Thyroid gland (tissue), 4 donors: ENCODE measurements at regions of chr11 and their contacts with region 1.

Region 1: DNA sequence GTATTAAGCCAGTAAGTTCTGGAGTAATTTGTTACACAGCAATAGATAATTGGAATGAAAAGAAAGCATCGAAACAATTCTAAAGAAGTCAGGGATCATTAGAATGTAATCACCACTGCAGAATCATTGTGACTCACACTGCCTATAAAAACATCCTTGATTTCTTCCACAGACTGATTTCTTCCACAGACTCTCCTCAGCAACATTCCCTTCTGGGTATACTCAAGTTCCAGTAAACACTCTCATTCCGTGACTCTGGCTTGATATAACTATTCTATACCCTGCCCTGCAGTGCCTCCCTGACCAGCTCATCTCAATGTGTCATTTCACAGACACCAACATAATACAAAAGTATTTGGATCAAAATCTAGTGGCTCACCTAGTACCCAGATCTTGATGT is 120.5 kb downstream of the BBOX1 start:
- DNase-seq: no peak
- H3K4me3 ChIP-seq: no peak overlapping the region
- H3K27ac ChIP-seq: peak overlapping the region in 1 of 3 donors; percentile 78
- H3K4me1 ChIP-seq: peaks cover 17 to 20% of the 10 kb centered on the region in 2 donors
- H3K27me3 ChIP-seq: no peaks in the 10 kb centered on the region
- CTCF ChIP-seq: no peak
- POLR2A ChIP-seq: no peak

Region 2: DNA sequence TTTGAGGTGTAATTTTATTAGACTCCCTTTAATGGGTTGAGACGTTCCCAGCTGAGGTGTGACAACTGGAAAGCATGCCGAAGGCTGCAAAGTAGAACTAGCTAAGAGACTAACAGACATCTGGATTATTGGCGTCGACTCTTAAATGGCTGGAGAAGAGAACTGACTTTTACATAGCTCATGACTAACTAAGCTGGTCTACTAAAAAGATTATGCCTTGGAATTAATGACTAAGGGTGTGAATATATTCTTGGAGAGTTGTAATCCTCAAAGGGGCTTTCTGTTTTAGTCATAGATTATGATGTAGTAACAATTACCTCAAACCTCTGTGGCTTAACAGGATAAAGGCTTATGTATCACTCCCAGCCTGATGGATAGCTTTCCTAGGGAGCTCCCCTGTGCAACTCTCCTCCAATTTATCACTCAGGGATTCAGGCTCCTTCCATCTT is 399.7 kb before region 1 on chr11:
- intact Hi-C with region 1: loop called (anchors 5 kb)
- DNase-seq: no peak
- H3K4me3 ChIP-seq: no peak overlapping the region
- H3K27ac ChIP-seq: no peak overlapping the region
- H3K4me1 ChIP-seq: peaks cover 0 to 8% of the 10 kb centered on the region in 2 donors
- H3K27me3 ChIP-seq: no peaks in the 10 kb centered on the region
- CTCF ChIP-seq: no peak
- POLR2A ChIP-seq: no peak

Region 3: DNA sequence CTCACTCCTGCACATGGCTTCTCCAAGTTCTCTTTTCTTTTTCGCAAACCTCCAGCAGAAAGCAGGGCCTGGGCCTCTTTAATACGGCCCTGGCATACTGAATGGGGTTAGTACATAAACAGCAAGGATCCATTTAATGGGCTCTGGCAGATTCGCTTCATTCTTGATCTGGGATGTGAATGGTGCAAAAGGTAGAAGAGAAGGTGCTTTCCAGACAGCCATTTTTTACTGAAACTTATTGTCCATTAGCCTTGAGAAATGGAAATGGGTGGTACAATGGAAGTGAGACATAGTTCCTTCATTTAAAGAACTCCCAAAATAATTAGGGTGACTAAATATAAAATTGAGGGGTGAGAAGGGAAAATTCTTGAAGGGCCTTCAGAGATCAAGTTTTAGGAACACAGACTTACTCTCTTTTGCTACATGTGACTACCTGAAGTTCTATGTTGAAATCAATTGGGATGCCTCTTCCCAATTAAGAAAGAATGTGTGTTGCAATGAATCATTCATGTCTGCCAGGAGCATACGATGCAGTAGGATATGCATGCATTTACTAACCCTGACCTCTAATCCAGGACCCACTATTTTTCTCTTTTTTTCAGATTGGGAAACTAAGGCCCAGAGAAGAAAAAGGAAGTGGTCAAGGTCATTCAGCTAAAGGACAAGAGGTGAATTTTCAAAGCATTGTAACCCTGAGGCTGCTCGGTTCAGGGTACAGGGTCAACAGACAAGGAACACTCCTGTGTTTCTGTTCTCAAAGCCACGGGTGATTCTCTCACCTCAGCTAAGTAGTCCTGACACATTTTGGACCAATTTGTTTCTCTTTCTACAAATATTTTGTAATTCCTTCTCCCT is 23.6 kb after region 1 on chr11:
- intact Hi-C with region 1: no loop called
- DNase-seq: no peak
- H3K4me3 ChIP-seq: no peak overlapping the region
- H3K27ac ChIP-seq: no peak overlapping the region
- H3K4me1 ChIP-seq: no peaks in the 10 kb centered on the region
- H3K27me3 ChIP-seq: no peaks in the 10 kb centered on the region
- CTCF ChIP-seq: no peak
- POLR2A ChIP-seq: no peak